ENCODE measurements at regions of chr1 and their contacts with region 1.

Region 1: DNA sequence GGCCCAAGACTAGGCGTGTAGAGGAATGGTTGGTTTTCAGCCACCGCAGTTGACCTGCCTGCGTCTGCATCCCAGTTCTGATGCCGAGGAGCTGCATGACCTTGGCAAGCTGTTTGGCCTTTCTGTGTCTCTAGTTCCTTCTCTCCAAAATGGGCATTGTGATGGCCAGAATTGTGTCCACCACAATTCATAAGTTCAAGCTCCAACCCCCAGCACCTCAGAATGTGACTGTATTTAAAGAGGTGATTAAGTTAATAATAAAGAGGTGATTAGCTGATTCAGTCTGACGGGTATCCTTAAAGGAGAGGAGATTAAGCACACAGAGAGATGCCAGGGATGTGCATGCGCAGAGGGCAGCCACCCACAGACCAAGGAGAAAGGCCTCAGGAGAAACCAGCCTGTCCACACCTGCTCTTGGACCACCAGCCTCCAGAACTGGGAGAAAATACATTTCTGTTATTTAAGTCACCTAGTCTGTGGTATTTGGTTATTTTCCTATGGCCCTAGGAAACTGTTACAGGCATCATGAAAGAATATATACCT is 28.5 kb downstream of the MAB21L3 start:
- DNase-seq: no peak
- H3K4me3 ChIP-seq: no peak overlapping the region
- H3K27ac ChIP-seq: peak overlapping the region; percentile 54
- H3K4me1 ChIP-seq: peaks cover 8% of the 10 kb centered on the region
- H3K27me3 ChIP-seq: no peaks in the 10 kb centered on the region
- CTCF ChIP-seq: no peak

Region 2: DNA sequence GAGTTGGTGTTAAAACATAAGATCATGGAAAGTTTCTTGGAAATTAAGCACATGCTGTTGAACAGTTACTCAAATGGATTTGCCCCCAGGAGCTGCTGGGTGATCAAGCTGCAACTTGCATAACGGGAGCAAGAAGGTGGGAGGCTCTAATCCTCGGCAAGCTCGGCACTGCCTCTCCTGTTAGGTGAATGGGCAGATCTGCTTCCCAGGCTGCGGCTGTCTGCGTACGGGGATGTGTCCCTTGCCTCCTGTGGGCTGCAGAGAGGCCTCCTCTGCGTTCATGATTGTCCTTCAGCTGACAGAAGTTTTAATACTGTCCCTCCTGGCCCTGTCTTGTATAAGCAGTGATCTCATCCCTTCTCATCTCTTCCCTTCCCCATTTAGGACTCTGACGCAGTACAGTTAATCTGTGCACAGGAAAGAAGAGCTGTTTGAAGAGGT is 270.1 kb after region 1 on chr1:
- CTCF ChIA-PET with region 1: no interaction called
- POLR2A ChIA-PET with region 1: no interaction called
- intact Hi-C with region 1: loop called (anchors 5 kb)
- DNase-seq: no peak
- H3K4me3 ChIP-seq: no peak overlapping the region
- H3K27ac ChIP-seq: peak overlapping the region; percentile 52
- H3K4me1 ChIP-seq: peaks cover 24% of the 10 kb centered on the region
- H3K27me3 ChIP-seq: no peaks in the 10 kb centered on the region
- CTCF ChIP-seq: no peak

Region 3: GRCh38 chr1:116498789-116499628 is 359.3 kb after region 1 on chr1:
- CTCF ChIA-PET with region 1: interaction called, 57 read pairs
- POLR2A ChIA-PET with region 1: no interaction called
- intact Hi-C with region 1: loop called (anchors 1 kb)
- DNase-seq: peak; percentile 91
- H3K4me3 ChIP-seq: no peak overlapping the region
- H3K27ac ChIP-seq: peak overlapping the region; percentile 75
- H3K4me1 ChIP-seq: peaks cover 38% of the 10 kb centered on the region
- H3K27me3 ChIP-seq: no peaks in the 10 kb centered on the region
- CTCF ChIP-seq: peak; percentile 89

Measured in A673 (cell line).